Left colon (tissue), 2 donors: ENCODE measurements at regions of chr13 and their contacts with region 1.

Region 1: DNA sequence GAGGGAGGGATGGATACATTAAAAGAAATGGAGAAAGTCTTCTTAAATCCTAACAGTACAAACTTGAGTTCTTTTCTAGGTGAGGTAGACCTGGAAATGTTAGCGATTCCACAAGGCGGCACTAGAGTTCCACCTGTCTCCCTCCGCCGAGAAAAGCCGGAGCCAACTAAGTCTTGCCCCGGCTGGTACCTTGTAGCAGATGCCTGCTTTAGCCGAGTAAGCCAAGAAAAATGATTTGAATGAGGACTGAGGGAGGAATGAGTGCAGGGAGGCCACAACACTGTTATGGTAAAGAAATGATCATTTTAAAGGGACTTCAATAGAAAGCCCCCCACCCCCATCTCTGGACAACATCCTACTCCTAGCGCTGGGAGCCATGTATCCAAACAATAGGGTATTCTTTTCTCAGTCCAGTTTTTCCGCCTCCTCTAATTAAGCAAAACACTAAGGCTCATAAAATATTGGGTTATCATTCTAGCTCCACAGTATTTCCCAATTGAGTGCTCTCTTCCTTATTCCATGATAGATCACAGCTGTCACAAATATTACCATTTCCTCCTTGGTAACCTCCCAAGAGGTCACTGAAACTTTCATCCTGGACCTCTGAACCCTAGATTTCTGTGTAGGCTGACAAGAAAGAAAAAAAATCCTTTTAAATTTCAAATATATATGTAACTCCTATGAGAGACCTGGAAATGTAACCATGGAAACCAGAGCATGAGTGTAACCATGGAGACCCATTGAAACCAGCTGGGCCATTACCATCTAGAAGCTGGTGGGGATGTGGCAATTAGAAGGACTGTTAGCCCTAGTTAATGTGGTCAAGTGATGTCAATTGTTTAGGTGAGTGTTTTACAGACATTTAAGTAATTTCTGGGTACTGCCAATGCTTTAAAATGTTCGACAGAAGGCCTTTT is 58.3 kb downstream of the GPALPP1 start:
- DNase-seq: peak; percentile 69 to 82
- ATAC-seq: peak; percentile 89

Region 2: GRCh38 chr13:45280751-45281634 is 233.3 kb after region 1 on chr13:
- intact Hi-C with region 1: loop called in 1 of 2 experiments (anchors 2 kb)
- DNase-seq: peak; percentile 65 to 82
- ATAC-seq: peak; percentile 100

Region 3: GRCh38 chr13:45297456-45298205 is 250.0 kb after region 1 on chr13:
- intact Hi-C with region 1: loop called in 1 of 2 experiments (anchors 10 kb)
- DNase-seq: no peak
- ATAC-seq: no peak

Region 4: DNA sequence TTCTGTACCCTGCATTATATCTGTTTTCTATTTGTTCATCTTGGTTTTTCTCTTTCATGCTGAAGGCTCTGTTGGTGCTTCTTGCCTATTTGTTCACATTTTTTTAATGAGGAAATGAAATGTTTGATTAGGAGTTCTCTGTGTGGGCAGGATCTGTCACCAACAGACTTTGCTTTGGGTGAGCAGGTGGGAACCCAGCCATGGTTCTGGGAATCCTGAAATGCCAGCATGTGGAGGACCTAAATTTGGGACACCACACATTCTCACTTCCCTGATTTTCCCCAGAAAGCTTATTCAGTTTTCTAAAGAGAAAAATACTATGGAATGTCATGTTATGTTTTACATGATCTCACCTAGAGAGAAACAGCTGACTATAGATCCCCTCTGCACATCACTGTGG is 259.3 kb after region 1 on chr13:
- intact Hi-C with region 1: loop called in 1 of 2 experiments (anchors 5 kb)
- DNase-seq: no peak
- ATAC-seq: no peak